Naive thymus-derived CD4-positive, alpha-beta T cell (primary cell): ENCODE measurements at regions of chr15 and their contacts with region 1.

Region 1: GRCh38 chr15:60585743-60586708 is 107.1 kb upstream of the ICE2 start:
- DNase-seq: peak in 7 of 9 donors; percentile 59 to 80 (median 76)
- ATAC-seq: peak; percentile 67
- H3K4me3 ChIP-seq: no peak overlapping the region
- H3K4me3 Mint-ChIP-seq: peak overlapping the region; percentile 66 to 88 (median 75)
- H3K27ac ChIP-seq: peak overlapping the region; percentile 25
- H3K27ac Mint-ChIP-seq: peak overlapping the region; percentile 79 to 93 (median 90)
- H3K4me1 ChIP-seq: peaks cover 65 to 83% of the 10 kb centered on the region in 2 donors
- H3K4me1 Mint-ChIP-seq: peaks cover 55 to 96% (median 87%) of the 10 kb centered on the region in 7 donors
- H3K27me3 ChIP-seq: no peaks in the 10 kb centered on the region
- H3K27me3 Mint-ChIP-seq: peaks cover 0 to 4% (median 0%) of the 10 kb centered on the region in 5 donors

Region 2: DNA sequence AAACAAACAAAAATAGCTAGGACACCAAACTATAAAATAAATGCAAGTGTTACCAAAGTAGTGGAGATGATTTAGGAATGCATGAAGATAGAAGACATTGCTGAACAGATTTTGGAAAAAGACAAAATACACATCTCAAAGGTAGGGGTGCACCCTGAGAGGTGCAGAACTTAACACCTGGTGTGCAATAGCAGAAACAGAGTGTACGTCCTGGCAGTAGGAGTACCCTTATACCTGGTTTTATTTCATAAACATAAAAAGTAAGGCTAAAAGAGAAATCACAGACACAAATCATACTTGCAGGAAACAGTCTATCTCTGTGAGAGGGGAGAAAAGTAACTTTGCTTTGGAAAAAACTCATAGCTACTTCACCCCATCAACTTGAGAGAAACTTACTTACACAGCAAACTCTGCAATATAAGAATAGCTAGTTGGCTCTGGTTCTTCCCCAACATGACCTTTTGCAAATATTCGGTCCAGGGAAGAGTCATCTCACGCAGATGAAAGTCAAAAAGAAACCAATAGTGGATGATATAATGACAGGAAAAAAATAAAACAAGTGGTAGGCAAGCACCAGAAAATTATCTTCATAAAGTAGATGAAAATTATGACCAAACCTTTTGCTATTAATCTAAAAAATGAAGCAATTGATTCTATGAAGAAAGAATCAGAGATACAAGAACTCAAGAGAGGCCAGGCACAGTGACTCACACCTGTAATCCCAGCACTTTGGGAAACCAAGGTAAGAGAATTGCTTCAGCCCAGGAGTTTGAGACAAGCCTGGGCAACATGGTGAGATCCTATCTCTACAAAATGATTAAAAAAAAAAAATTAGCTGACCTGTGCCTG is 788.0 kb before region 1 on chr15:
- CTCF ChIA-PET with region 1: no interaction called
- POLR2A ChIA-PET with region 1: no interaction called
- intact Hi-C with region 1: loop called in 1 of 2 experiments (anchors 5 kb)
- DNase-seq: no peak
- ATAC-seq: no peak
- H3K4me3 ChIP-seq: peak overlapping the region; percentile 4
- H3K4me3 Mint-ChIP-seq: peak overlapping the region; percentile 44 to 75 (median 62)
- H3K27ac ChIP-seq: peak overlapping the region; percentile 70
- H3K27ac Mint-ChIP-seq: peak overlapping the region; percentile 38 to 96 (median 92)
- H3K4me1 ChIP-seq: peaks cover 22 to 72% of the 10 kb centered on the region in 2 donors
- H3K4me1 Mint-ChIP-seq: peaks cover 28 to 97% (median 88%) of the 10 kb centered on the region in 7 donors
- H3K27me3 ChIP-seq: no peaks in the 10 kb centered on the region
- H3K27me3 Mint-ChIP-seq: peaks cover 0 to 27% (median 0%) of the 10 kb centered on the region in 5 donors

Region 3: GRCh38 chr15:60507596-60508424 is 78.2 kb before region 1 on chr15:
- CTCF ChIA-PET with region 1: interaction called, 6 read pairs
- POLR2A ChIA-PET with region 1: interaction called, 3 read pairs
- intact Hi-C with region 1: loop called (anchors 1 kb)
- DNase-seq: peak in 7 of 9 donors; percentile 55 to 80 (median 73)
- ATAC-seq: peak; percentile 97
- H3K4me3 ChIP-seq: no peak overlapping the region
- H3K4me3 Mint-ChIP-seq: peak overlapping the region in 5 of 10 donors; percentile 7 to 30 (median 10)
- H3K27ac ChIP-seq: peak overlapping the region; percentile 6
- H3K27ac Mint-ChIP-seq: peak overlapping the region; percentile 38 to 86 (median 55)
- H3K4me1 ChIP-seq: peaks cover 4 to 7% of the 10 kb centered on the region in 2 donors
- H3K4me1 Mint-ChIP-seq: peaks cover 16 to 60% (median 42%) of the 10 kb centered on the region in 7 donors
- H3K27me3 ChIP-seq: no peaks in the 10 kb centered on the region
- H3K27me3 Mint-ChIP-seq: no peaks in the 10 kb centered on the region

Region 4: GRCh38 chr15:60568301-60568742 is 17.7 kb before region 1 on chr15:
- CTCF ChIA-PET with region 1: interaction called, 23 read pairs
- POLR2A ChIA-PET with region 1: interaction called, 15 read pairs
- intact Hi-C with region 1: loop called (anchors 2 kb)
- DNase-seq: no peak
- ATAC-seq: no peak
- H3K4me3 ChIP-seq: no peak overlapping the region
- H3K4me3 Mint-ChIP-seq: peak overlapping the region; percentile 7 to 78 (median 62)
- H3K27ac ChIP-seq: no peak overlapping the region
- H3K27ac Mint-ChIP-seq: peak overlapping the region in 8 of 9 donors; percentile 65 to 89 (median 78)
- H3K4me1 ChIP-seq: peaks cover 80% of the 10 kb centered on the region in 2 donors
- H3K4me1 Mint-ChIP-seq: peaks cover 66 to 99% (median 93%) of the 10 kb centered on the region in 7 donors
- H3K27me3 ChIP-seq: no peaks in the 10 kb centered on the region
- H3K27me3 Mint-ChIP-seq: no peaks in the 10 kb centered on the region

Region 5: GRCh38 chr15:60787837-60788691 is 202.0 kb after region 1 on chr15:
- CTCF ChIA-PET with region 1: interaction called, 3 read pairs
- POLR2A ChIA-PET with region 1: no interaction called
- intact Hi-C with region 1: loop called in 1 of 2 experiments (anchors 5 kb)
- DNase-seq: peak in 3 of 9 donors; percentile 7 to 23 (median 19)
- ATAC-seq: peak; percentile 74
- H3K4me3 ChIP-seq: no peak overlapping the region
- H3K4me3 Mint-ChIP-seq: peak overlapping the region in 4 of 10 donors; percentile 2 to 43 (median 8)
- H3K27ac ChIP-seq: no peak overlapping the region
- H3K27ac Mint-ChIP-seq: peak overlapping the region in 5 of 9 donors; percentile 1 to 64 (median 5)
- H3K4me1 ChIP-seq: no peaks in the 10 kb centered on the region
- H3K4me1 Mint-ChIP-seq: peaks cover 8 to 37% (median 16%) of the 10 kb centered on the region in 7 donors
- H3K27me3 ChIP-seq: no peaks in the 10 kb centered on the region
- H3K27me3 Mint-ChIP-seq: no peaks in the 10 kb centered on the region

Region 6: DNA sequence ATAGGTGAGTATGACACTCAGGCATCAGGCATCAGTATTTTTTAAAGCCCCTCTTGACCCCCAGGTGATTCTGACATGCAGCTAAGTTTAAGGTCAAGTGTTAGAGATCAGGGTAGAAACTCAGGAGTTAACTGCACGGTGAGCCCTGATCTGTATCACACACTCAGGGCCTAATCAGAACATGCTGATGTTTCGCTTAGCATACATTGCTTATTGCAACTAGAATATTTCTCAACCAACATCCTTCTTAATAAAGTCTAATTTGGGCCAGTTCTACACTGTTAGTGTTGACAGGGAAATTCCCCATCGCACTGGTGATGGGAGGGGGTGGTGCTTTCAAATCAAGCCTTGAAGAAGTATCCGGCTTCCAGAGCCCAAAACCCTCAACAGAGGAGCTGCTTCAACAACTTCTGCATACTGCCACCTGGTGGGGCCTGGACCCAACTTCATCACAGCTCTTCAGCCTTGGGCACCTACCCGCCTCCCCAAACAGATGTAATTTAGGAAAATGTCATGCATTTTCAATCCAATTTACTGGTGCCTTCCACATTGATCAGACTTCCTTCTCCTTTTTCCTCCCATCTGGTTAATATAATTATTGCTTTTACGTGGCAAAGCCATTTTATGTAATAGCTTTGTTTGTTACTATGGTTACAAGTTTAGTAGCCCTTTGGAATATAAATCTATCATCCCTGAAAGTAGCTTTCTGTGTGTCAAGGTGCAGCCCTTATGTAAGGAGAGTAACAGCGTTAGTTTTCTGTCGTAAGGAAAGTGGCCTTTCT is 330.8 kb after region 1 on chr15:
- CTCF ChIA-PET with region 1: interaction called, 58 read pairs
- POLR2A ChIA-PET with region 1: interaction called, 10 read pairs
- intact Hi-C with region 1: loop called (anchors 1 kb)
- DNase-seq: peak; percentile 59 to 89 (median 82)
- ATAC-seq: peak; percentile 99
- H3K4me3 ChIP-seq: no peak overlapping the region
- H3K4me3 Mint-ChIP-seq: peak overlapping the region in 1 of 10 donors; percentile 23
- H3K27ac ChIP-seq: no peak overlapping the region
- H3K27ac Mint-ChIP-seq: peak overlapping the region in 7 of 9 donors; percentile 12 to 79 (median 69)
- H3K4me1 ChIP-seq: peaks cover 5 to 6% of the 10 kb centered on the region in 2 donors
- H3K4me1 Mint-ChIP-seq: peaks cover 7 to 21% (median 10%) of the 10 kb centered on the region in 7 donors
- H3K27me3 ChIP-seq: no peaks in the 10 kb centered on the region
- H3K27me3 Mint-ChIP-seq: peaks cover 0 to 3% (median 0%) of the 10 kb centered on the region in 5 donors